ENCODE measurements at regions of chr4 and their contacts with region 1.

Region 1: DNA sequence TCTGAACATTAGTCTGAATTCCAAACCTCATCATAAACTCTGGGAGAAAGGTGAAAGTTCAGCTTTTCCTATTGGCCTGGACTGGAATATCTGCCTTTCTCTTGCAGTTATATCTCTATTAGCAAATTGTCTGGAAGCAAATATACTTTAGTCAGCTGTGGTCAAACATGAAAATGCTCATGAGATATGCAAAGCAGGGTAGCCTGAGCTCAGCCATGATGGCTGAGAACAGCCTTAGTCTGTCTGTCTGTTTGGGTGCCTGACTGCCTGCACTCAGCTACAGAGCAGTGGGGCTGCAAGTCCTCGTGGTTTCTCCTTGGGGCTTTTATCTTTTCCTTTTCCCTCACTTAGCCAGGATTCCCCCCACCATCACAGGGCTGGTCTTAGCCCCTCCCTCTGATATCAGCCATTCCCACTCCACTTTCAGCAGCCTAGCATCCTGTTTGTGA is 19.5 kb upstream of the PGRMC2 start:
- DNase-seq: no peak
- ATAC-seq: no peak
- H3K4me3 ChIP-seq: no peak overlapping the region
- H3K27ac ChIP-seq: no peak overlapping the region
- H3K4me1 ChIP-seq: peaks cover 0 to 75% (median 16%) of the 10 kb centered on the region in 9 donors
- H3K27me3 ChIP-seq: no peaks in the 10 kb centered on the region
- CTCF ChIP-seq: no peak

Region 2: DNA sequence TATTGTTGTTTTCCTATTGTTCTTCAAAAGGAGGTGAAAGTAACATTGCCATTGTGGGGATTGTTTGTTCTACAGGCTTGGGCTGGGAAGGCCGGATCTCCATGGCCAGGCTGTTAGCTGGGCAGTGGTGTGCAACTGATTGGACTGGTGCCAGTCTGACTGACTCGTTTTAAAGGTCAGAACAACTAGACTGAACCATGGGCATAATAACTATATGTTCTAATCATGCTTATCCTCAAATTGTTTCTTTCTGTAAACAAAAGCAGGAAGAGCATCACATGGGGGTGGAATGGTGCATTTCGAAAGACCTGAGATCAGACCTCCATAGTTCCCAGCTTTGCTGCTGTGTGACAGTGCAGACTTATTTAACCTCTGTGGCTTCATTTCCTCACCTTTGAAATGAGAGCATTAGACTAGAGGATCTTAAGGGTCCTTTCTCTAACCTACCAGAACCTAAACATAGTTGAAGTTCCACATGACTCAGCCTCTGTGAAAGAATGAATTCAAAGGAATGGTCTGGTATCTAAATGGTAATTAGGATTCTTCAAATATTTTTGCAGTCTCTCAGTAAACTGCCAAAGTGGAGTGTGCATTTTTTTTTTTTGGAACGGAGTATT is 47.2 kb after region 1 on chr4:
- intact Hi-C with region 1: loop called in 1 of 10 experiments (anchors 5 kb)
- DNase-seq: peak; percentile 30 to 33
- ATAC-seq: peak in 3 of 8 donors; percentile 19 to 50 (median 22)
- H3K4me3 ChIP-seq: no peak overlapping the region
- H3K27ac ChIP-seq: peak overlapping the region in 5 of 10 donors; percentile 30 to 49 (median 36)
- H3K4me1 ChIP-seq: peaks cover 0 to 50% (median 37%) of the 10 kb centered on the region in 9 donors
- H3K27me3 ChIP-seq: no peaks in the 10 kb centered on the region
- CTCF ChIP-seq: no peak

Measured in heart right ventricle (tissue), 16 donors.